Caco-2 (cell line): ENCODE measurements at regions of chr9 and their contacts with region 1.

Region 1: GRCh38 chr9:32663741-32664140 is 28.3 kb upstream of the TAF1L start:
- DNase-seq: no peak
- H3K4me3 ChIP-seq: no peak overlapping the region
- H3K4me3 Mint-ChIP-seq: no peak overlapping the region
- H3K27ac Mint-ChIP-seq: no peak overlapping the region
- H3K4me1 ChIP-seq: no peaks in the 10 kb centered on the region
- H3K4me1 Mint-ChIP-seq: no peaks in the 10 kb centered on the region
- H3K27me3 ChIP-seq: no peaks in the 10 kb centered on the region
- H3K27me3 Mint-ChIP-seq: peaks cover 4% of the 10 kb centered on the region
- CTCF ChIP-seq: no peak

Region 2: GRCh38 chr9:32431940-32432555 is 231.7 kb before region 1 on chr9:
- CTCF ChIA-PET with region 1: no interaction called
- POLR2A ChIA-PET with region 1: no interaction called
- intact Hi-C with region 1: no loop called
- DNase-seq: peak; percentile 73
- H3K4me3 ChIP-seq: no peak overlapping the region
- H3K4me3 Mint-ChIP-seq: no peak overlapping the region
- H3K27ac Mint-ChIP-seq: no peak overlapping the region
- H3K4me1 ChIP-seq: peaks cover 5% of the 10 kb centered on the region
- H3K4me1 Mint-ChIP-seq: peaks cover 6% of the 10 kb centered on the region
- H3K27me3 ChIP-seq: no peaks in the 10 kb centered on the region
- H3K27me3 Mint-ChIP-seq: no peaks in the 10 kb centered on the region
- CTCF ChIP-seq: peak; percentile 68 to 77

Region 3: GRCh38 chr9:32558408-32558934 is 105.3 kb before region 1 on chr9:
- CTCF ChIA-PET with region 1: no interaction called
- POLR2A ChIA-PET with region 1: no interaction called
- intact Hi-C with region 1: no loop called
- DNase-seq: no peak
- H3K4me3 ChIP-seq: no peak overlapping the region
- H3K4me3 Mint-ChIP-seq: no peak overlapping the region
- H3K27ac Mint-ChIP-seq: no peak overlapping the region
- H3K4me1 ChIP-seq: no peaks in the 10 kb centered on the region
- H3K4me1 Mint-ChIP-seq: no peaks in the 10 kb centered on the region
- H3K27me3 ChIP-seq: no peaks in the 10 kb centered on the region
- H3K27me3 Mint-ChIP-seq: no peaks in the 10 kb centered on the region
- CTCF ChIP-seq: no peak

Region 4: GRCh38 chr9:32618261-32618660 is 45.5 kb before region 1 on chr9:
- CTCF ChIA-PET with region 1: no interaction called
- POLR2A ChIA-PET with region 1: no interaction called
- intact Hi-C with region 1: loop called (anchors 5 kb)
- DNase-seq: no peak
- H3K4me3 ChIP-seq: no peak overlapping the region
- H3K4me3 Mint-ChIP-seq: no peak overlapping the region
- H3K27ac Mint-ChIP-seq: no peak overlapping the region
- H3K4me1 ChIP-seq: no peaks in the 10 kb centered on the region
- H3K4me1 Mint-ChIP-seq: no peaks in the 10 kb centered on the region
- H3K27me3 ChIP-seq: no peaks in the 10 kb centered on the region
- H3K27me3 Mint-ChIP-seq: peaks cover 12% of the 10 kb centered on the region
- CTCF ChIP-seq: no peak